ENCODE measurements at regions of chr4 and their contacts with region 1.

Region 1: DNA sequence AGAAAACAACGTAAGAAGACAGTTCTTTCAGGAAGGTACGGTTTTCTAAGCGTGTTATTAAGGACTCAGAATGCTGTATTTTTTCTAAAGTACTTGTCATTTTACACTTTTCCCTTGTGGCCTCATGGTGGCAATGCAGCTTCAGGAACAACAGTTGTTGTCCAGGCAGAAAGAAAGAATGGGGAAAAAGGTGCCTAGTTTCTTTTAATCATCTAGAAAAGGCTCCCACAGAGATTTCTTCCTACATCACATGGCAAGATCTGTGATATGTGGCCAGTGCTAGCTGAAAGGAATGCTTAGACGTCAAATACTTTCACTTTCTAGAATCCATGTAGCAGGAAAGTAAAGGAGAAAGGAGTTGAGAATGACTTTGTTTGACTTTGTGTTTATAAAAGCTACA is 49.0 kb upstream of the TRAM1L1 start:
- DNase-seq: peak; percentile 84
- ATAC-seq: peak; percentile 82
- H3K4me3 ChIP-seq: no peak overlapping the region
- H3K27ac ChIP-seq: no peak overlapping the region
- H3K4me1 ChIP-seq: no peaks in the 10 kb centered on the region
- H3K27me3 ChIP-seq: no peaks in the 10 kb centered on the region
- CTCF ChIP-seq: peak; percentile 77
- POLR2A ChIP-seq: no peak
- RAD21 ChIP-seq: peak; percentile 93

Region 2: DNA sequence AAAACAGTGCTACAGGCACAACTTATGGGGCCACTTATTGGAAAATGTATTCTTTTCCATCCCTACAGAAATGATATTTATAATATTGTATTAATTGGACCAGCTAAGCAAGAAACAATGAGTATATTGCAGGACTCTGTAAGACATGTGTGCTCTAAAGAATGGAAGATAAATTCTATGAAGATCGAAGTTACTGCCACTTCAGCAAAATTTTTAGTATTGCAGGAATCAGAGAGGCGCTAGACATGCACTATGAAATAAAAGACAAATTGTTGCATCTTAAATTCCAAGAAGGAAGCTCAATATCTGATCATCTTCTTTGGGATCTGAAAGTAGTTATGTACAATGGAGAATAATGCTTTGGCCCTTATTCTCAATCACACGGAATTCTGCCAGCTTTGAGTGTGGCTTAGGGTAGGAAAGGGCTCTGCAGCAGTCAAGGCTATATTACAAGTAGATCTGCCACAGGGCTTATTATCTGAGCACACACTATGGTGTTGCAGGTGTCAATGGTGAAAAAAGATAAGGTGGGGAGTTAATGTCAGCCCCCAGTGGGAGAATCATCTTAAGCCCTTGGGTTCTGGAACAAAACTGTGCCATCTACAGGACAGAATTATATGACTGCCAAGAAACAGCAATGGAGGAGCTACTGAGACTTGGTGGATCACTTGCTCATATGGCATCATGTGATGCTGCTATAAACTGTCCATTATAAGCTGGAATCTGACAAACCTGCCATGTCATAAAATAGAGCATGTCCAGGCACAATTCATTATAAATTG is 565.9 kb after region 1 on chr4:
- CTCF ChIA-PET with region 1: no interaction called
- POLR2A ChIA-PET with region 1: no interaction called
- dilution Hi-C with region 1: no loop called
- in situ Hi-C with region 1: no loop called
- intact Hi-C with region 1: loop called (anchors 10 kb)
- DNase-seq: peak; percentile 0
- ATAC-seq: no peak
- H3K4me3 ChIP-seq: no peak overlapping the region
- H3K27ac ChIP-seq: no peak overlapping the region
- H3K4me1 ChIP-seq: no peaks in the 10 kb centered on the region
- H3K27me3 ChIP-seq: no peaks in the 10 kb centered on the region
- CTCF ChIP-seq: 0 out of 2 replicates have a peak, but pooled peaks have one; percentile 15
- POLR2A ChIP-seq: no peak
- RAD21 ChIP-seq: no peak

Region 3: DNA sequence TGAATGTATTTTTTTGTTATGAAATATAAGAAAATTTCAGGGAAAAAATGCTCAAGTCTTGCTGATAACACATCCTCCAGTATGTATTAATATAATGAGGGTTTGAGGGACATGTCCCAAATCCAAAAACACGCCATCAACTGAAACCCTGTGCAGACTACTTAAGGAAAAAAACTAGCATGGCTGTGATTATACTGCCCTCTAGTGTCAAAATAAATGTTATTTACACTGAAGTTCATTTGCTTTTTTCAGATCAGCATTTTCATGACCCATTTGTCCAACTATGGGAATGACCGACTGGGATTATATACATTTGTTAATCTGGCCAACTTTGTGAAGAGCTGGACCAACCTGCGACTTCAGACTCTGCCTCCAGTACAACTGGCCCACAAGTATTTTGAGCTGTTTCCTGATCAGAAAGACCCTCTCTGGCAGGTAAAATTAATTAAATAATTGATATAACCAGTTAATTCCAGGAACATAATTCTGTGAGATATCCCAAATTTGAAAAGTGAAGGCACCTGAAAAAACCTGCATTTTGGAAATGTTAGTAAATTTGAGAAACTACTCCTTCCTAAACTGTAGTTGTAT is 1089.9 kb after region 1 on chr4:
- CTCF ChIA-PET with region 1: no interaction called
- POLR2A ChIA-PET with region 1: no interaction called
- dilution Hi-C with region 1: no loop called
- in situ Hi-C with region 1: loop called (anchors 10 kb)
- intact Hi-C with region 1: loop called (anchors 1 kb)
- DNase-seq: peak; percentile 80
- ATAC-seq: peak; percentile 70
- H3K4me3 ChIP-seq: no peak overlapping the region
- H3K27ac ChIP-seq: no peak overlapping the region
- H3K4me1 ChIP-seq: no peaks in the 10 kb centered on the region
- H3K27me3 ChIP-seq: no peaks in the 10 kb centered on the region
- CTCF ChIP-seq: peak; percentile 83
- POLR2A ChIP-seq: 0 out of 2 replicates have a peak, but pooled peaks have one; percentile 28
- RAD21 ChIP-seq: peak; percentile 96

Region 4: DNA sequence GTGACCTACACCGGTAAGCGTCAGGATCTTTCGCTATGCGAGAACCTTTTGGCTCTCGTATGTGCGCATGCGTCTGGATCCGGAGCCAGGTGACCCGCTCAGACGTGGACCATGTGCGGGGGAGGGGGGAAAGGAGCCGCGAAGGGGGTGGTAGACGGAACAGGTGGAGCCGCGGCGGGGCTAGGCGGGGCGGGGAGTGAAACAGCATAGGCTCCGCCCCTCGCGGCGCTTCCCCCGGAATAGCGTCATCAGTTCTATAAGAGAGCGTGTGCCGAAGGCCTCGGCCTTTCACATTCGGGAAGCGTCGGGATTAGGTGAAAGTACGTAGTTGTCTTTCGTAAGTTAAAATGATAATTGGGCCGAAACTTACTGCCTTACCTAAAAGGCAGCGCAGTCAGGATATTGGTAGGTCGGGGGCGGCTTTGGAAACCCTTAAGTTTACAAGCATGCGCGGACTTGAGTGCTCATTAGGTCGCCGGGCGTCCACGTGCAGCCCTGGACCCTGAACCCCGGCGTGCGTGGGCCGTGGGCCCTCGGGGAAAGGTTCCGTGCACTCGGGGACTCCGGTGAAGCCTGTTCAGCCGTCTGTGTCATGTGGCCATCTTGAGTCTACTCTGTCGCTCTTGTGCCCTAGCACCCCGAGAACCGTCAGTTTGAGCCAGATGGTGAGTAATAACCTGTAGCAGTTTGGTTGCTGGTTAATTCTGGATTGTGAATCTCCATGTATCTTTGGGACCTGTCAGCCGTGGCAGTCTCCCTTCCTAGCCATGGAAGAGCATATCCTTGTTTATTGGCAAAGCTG is 1144.3 kb after region 1 on chr4:
- CTCF ChIA-PET with region 1: no interaction called
- POLR2A ChIA-PET with region 1: no interaction called
- dilution Hi-C with region 1: no loop called
- in situ Hi-C with region 1: no loop called
- intact Hi-C with region 1: loop called (anchors 2 kb)
- DNase-seq: peak; percentile 88
- ATAC-seq: peak; percentile 87
- H3K4me3 ChIP-seq: peak overlapping the region; percentile 72
- H3K27ac ChIP-seq: peak overlapping the region; percentile 71
- H3K4me1 ChIP-seq: peaks cover 8% of the 10 kb centered on the region
- H3K27me3 ChIP-seq: no peaks in the 10 kb centered on the region
- CTCF ChIP-seq: no peak
- POLR2A ChIP-seq: peak; percentile 98
- RAD21 ChIP-seq: no peak